ENCODE measurements at regions of chr6 and their contacts with region 1.

Region 1: GRCh38 chr6:28266962-28267694 is at the start of gene ZSCAN26:
- DNase-seq: peak; percentile 66 to 92 (median 90)
- ATAC-seq: peak; percentile 95 to 97
- H3K4me3 Mint-ChIP-seq: peak within 1 kb of the TSS in 1 of 10 donors; percentile 35
- H3K27ac Mint-ChIP-seq: peak within 1 kb of the TSS in 2 of 10 donors; percentile 52 to 75
- H3K4me1 Mint-ChIP-seq: peaks cover 10 to 30% (median 19%) of the 10 kb centered on the region in 4 donors
- H3K27me3 Mint-ChIP-seq: no peaks in the 10 kb centered on the region
- polyA plus RNA-seq, gene ZSCAN26: 14.3 to 16.1 (median 14.7) TPM

Region 2: GRCh38 chr6:28136585-28137504 is 130.3 kb before region 1 on chr6:
- POLR2A ChIA-PET with region 1: interaction called, 10 read pairs
- DNase-seq: peak; percentile 42 to 83 (median 70)
- ATAC-seq: peak; percentile 48 to 51
- H3K4me3 Mint-ChIP-seq: peak overlapping the region; percentile 93 to 99 (median 96)
- H3K27ac Mint-ChIP-seq: peak overlapping the region; percentile 95 to 99 (median 99)
- H3K4me1 Mint-ChIP-seq: peaks cover 40 to 82% (median 71%) of the 10 kb centered on the region in 4 donors
- H3K27me3 Mint-ChIP-seq: no peaks in the 10 kb centered on the region

Region 3: GRCh38 chr6:28252009-28252975 is 14.8 kb before region 1 on chr6 and contains the start of gene ZKSCAN4:
- POLR2A ChIA-PET with region 1: interaction called, 75 read pairs
- DNase-seq: peak; percentile 55 to 91 (median 82)
- ATAC-seq: peak; percentile 83 to 93
- H3K4me3 Mint-ChIP-seq: peak within 1 kb of the TSS; percentile 88 to 100 (median 98)
- H3K27ac Mint-ChIP-seq: peak within 1 kb of the TSS; percentile 91 to 98 (median 95)
- H3K4me1 Mint-ChIP-seq: peaks cover 18 to 48% (median 46%) of the 10 kb centered on the region in 4 donors
- H3K27me3 Mint-ChIP-seq: peaks cover 0 to 2% (median 0%) of the 10 kb centered on the region in 5 donors
- polyA plus RNA-seq, gene ZKSCAN4: 3.4 to 7.1 (median 4.1) TPM

Region 4: DNA sequence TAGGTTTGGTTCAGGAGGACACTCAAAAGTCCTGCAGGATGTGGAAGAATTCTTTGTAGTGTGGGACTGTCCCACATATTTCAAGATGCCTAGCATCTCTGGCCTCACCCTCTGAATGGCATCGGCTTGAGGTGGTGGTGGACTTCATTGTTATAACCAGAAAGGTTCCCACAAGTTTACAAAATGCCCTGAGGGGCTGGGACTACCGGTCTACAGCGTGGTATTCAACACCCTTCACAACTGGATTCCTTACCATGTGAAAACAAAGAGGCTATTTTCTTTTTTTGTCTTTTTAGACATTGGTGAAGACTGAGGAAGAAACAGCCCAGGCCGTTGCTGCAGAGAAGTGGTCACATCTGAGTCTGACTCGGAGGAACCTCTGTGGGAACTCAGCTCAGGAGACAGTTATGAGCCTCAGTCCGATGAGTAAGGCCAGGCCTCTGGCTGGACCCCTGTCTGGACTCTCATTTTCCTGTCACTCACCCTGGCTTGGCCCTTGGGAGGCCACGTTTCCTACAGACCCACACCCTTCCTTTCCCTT is 29.5 kb after region 1 on chr6:
- POLR2A ChIA-PET with region 1: no interaction called
- DNase-seq: no peak
- ATAC-seq: no peak
- H3K4me3 Mint-ChIP-seq: no peak overlapping the region
- H3K27ac Mint-ChIP-seq: no peak overlapping the region
- H3K4me1 Mint-ChIP-seq: no peaks in the 10 kb centered on the region
- H3K27me3 Mint-ChIP-seq: peaks cover 0 to 9% (median 0%) of the 10 kb centered on the region in 5 donors

Region 5: DNA sequence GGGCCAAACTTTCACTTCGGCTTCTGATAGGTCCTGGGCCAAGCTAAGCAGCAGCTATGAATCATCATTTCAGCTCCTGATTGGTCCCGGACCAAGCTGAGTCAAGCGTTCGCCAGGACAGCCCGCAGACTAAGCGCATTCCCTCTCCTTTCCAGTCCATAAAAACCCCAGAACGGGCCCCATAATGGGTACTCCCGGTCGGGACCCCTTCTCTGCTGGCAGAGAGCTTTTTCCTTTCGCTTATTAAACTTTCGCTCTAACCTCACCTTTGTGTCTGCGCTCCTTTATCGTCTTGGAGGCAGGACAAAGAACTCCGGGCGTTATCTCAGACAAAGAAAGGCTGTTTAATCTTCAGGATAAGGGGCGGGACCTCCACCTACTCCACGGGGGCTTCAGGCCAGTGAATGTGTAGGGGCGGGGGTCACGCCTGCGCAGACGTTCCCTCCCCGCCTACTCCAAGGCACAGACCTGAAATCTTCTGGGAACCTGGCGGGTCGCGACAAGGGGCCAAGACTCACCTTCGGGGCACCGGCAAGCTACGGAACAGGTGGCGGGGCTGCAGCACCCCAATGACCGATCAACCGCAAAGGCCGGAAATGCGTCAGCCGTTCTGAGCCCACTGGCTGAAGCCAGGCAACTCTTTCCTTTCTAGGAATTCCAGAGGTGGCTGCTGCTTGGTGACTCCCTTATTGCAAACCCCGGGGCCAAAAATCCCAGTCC is 68.6 kb after region 1 on chr6 and contains the start of gene ZSCAN31:
- POLR2A ChIA-PET with region 1: interaction called, 15 read pairs
- DNase-seq: peak; percentile 62 to 92 (median 76)
- ATAC-seq: peak; percentile 88 to 91
- H3K4me3 Mint-ChIP-seq: no peak within 1 kb of the TSS
- H3K27ac Mint-ChIP-seq: no peak within 1 kb of the TSS
- H3K4me1 Mint-ChIP-seq: peaks cover 0 to 11% (median 8%) of the 10 kb centered on the region in 4 donors
- H3K27me3 Mint-ChIP-seq: no peaks in the 10 kb centered on the region
- polyA plus RNA-seq, gene ZSCAN31: 0.79 to 1.0 (median 0.98) TPM

Region 6: DNA sequence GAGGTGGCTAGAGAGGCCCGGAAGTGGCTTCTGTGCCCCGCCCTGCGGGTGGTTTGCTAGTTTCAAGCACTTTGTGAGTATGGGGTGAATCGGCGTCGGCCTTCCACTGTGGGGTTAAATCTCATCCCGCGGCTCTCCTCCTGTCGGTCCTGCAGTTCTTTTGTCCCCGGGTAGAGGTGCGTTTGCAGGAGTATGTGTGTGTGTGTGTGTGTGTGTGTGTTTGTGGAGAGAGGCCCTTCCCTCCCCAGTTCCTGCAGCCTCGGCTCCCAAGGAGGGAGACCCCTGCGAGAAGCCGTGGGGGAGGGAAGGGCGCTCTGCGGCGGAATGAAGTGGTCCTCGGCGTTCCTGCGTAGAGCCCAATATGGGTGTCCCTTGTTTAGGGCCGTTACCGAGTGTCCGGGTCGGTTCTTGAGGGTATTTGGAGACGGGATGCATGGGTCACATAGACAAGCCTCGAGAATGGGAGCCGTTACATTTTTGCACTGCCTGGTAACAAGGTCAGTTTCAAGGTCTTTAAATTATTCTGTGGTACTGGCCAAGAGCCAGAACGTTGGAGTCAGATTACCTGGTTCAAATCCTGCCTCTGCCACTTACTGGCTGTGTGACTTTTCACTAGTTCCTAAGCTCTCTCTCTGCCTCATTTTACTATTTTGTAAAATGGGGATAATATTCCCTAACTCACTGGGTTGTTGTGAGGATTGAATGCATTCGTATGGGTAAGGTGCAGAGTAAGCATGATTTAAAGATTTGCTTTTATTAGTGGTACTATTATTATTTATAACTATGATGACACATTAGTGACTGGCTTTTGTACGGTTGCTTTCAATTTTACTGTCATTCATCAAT is 83.0 kb after region 1 on chr6 and contains the start of gene ZKSCAN3:
- POLR2A ChIA-PET with region 1: interaction called, 14 read pairs
- DNase-seq: peak; percentile 59 to 90 (median 76)
- ATAC-seq: peak; percentile 99 to 100
- H3K4me3 Mint-ChIP-seq: peak within 1 kb of the TSS; percentile 88 to 100 (median 99)
- H3K27ac Mint-ChIP-seq: peak within 1 kb of the TSS; percentile 91 to 98 (median 97)
- H3K4me1 Mint-ChIP-seq: peaks cover 17 to 45% (median 36%) of the 10 kb centered on the region in 4 donors
- H3K27me3 Mint-ChIP-seq: peaks cover 3 to 18% (median 9%) of the 10 kb centered on the region in 5 donors
- polyA plus RNA-seq, gene ZKSCAN3: 0.81 to 4.0 (median 2.0) TPM

Region 7: DNA sequence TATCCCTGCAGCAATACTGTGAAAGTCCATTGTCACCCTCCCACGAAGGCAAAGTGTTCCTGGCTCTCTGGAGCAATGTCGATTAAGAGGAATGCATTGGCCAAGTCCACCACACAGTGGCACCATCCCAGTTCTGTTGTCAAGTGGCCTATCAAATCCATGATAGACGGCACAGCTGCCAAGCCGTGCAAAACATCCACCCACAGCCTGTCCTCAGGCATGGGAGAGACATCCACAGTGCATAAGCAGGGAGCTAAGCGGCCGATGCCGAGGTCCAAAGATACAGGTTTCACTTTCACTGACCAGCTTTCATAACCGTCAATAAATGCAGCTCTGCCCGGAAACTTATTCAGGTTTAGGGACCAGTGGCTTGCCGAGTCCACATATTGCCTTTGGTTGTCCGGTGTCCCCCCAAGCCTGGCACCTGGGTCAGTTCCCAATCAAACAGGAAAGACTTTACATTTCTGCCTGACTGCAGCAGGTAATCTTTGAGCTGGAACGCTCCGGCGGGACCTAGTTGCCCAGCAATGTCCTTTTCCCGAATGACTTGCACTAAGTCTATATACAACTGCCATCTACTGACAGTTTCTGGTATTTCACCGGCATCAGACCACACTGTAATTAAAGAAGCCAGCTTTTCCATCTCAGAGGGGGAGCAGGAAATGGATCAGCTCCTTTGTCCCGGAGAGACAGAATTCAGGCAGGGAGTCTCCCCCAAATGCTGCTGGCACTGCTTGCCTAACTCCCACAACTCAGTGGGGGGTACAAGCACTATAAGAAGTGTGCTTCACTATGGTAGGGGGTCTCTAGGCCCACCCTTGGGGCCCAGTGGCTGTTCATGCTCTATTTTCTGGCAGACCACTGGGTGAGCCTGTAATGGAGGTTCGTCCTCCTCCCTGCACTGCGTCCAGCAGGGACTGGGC is 88.9 kb after region 1 on chr6:
- POLR2A ChIA-PET with region 1: interaction called, 11 read pairs
- DNase-seq: peak; percentile 25 to 78 (median 62)
- ATAC-seq: peak; percentile 85 to 92
- H3K4me3 Mint-ChIP-seq: peak overlapping the region; percentile 83 to 95 (median 91)
- H3K27ac Mint-ChIP-seq: peak overlapping the region; percentile 29 to 90 (median 75)
- H3K4me1 Mint-ChIP-seq: peaks cover 12 to 44% (median 35%) of the 10 kb centered on the region in 4 donors
- H3K27me3 Mint-ChIP-seq: no peaks in the 10 kb centered on the region

Region 8: DNA sequence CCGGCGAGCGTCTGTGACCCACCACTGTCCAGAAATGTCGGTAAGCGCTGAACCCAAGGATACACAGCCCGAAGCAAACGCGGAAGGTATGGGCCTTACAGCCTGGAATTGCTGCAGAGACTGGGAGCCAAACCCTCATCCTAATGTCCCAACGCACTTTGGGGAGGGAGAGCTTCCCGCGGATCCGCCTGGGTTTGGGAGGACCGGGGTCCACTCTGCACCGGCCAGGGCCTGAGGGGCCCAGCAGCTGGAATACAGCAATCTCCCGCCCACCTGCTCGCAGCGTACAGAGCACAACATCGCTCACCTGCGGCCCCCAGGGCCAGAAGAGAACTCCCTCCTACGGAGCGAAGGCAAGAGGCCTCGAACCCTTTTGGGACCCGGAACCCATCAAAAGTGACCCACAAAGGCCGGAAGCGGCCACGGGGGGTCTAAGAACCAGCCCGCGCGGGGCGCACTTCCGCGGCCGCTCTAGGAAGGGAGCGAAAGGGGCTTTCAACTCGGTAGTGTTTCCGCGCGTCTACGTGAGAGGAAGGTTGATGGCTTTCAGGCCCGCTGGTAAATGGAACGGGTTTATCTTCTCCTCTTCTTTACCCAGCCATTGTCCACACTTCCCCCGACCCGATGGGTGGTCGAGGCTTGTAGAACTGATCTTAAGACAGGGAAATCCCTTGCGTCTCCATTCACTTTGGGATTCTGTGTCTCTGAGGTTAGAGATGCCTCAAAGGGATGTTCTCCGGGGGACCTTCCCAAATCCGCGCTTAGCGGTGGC is 132.4 kb after region 1 on chr6 and contains the start of gene ZSCAN12:
- POLR2A ChIA-PET with region 1: interaction called, 14 read pairs
- DNase-seq: peak; percentile 71 to 92 (median 84)
- ATAC-seq: peak; percentile 94
- H3K4me3 Mint-ChIP-seq: peak within 1 kb of the TSS; percentile 87 to 97 (median 95)
- H3K27ac Mint-ChIP-seq: peak within 1 kb of the TSS; percentile 91 to 98 (median 96)
- H3K4me1 Mint-ChIP-seq: peaks cover 29 to 49% (median 45%) of the 10 kb centered on the region in 4 donors
- H3K27me3 Mint-ChIP-seq: peaks cover 9 to 26% (median 15%) of the 10 kb centered on the region in 5 donors
- polyA plus RNA-seq, gene ZSCAN12: 1.8 to 3.8 (median 3.3) TPM